ENCODE measurements at regions of chr3 and their contacts with region 1.

Region 1: DNA sequence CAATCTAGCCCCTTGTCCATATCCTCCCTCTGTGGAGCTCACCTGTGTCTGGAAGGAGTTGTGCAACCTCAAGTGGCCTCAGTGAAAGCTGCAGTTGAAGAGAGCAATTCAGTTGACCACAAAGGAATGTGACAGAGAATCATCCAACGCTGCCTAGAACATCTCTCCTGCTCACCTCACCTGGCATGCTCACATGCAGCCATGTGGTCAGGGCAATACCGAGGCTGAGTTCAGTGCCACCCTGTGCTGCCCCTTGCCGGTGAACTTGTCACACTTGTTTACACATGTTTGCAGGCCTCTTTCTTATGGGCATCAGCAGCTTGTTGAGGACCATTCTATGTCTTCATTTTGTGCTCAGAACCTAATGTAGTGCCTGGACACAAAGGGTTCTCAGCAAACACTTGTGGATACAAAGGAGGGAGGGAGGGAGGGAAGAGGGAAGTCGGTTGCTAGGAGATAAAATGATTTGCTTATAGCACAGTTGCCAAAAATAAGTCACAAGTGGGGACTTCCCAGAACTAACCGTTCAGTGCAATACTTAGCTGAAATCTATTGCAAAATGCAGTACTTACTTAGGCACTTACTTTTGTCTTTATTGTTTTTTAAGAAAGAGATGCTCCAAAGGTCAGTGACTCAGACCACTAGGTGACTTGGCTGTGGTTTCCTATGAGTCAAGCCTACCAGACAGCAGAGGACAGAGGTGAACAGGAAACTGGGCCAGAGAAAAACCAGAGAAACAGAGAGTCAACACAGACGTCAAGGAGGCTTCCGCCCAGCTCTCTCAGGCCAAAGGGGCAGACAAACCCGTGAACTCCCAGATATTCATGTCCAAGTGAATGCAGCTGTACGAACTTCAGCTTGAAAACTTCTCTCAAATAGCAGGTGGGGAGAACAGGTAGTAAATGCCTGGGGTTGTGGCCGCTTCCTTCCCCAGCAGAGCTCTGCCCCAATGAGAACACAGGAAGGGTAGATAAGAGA is 227.8 kb upstream of the CTNNB1 start:
- DNase-seq: peak; percentile 52 to 88
- H3K4me3 ChIP-seq: no peak overlapping the region
- H3K27ac ChIP-seq: peak overlapping the region in 1 of 2 donors; percentile 42
- H3K4me1 ChIP-seq: peaks cover 5 to 7% of the 10 kb centered on the region in 2 donors
- H3K27me3 ChIP-seq: no peaks in the 10 kb centered on the region
- CTCF ChIP-seq: no peak

Region 2: DNA sequence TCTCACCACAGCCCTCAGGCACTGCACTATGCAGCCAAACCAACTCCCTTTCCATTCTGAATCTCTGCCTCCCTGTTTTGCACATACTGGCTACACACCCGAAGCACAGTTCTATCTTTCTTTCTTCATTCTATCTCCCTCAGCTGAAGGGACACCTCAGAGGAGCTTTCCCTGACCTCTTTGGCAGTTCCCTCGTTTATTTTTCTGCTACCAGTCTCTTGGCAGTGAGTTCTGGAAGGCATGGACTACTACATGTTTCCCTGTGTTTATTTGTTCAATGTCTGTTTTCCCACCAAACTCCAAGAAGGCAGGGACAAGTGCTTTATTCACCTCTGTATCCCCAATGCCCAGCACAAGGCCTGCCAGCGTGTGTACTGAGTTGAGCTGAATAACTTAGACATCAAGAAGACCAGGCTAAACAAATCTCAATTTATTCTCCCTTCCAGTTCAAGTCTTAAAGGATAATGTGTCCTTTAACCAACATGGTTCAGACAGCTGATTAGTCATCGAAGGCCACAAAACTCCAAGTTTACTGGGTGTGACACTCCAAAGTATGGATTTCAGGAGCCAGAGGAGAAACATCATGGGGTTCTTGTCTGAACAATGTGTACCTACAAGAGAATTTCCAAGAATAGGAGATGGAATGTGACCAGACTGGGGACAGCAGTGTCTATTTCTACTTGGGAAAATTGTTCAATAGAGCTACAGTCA is 32.3 kb before region 1 on chr3:
- intact Hi-C with region 1: loop called (anchors 1 kb)
- DNase-seq: no peak
- H3K4me3 ChIP-seq: no peak overlapping the region
- H3K27ac ChIP-seq: peak overlapping the region; percentile 55 to 60
- H3K4me1 ChIP-seq: peaks cover 0 to 13% of the 10 kb centered on the region in 2 donors
- H3K27me3 ChIP-seq: no peaks in the 10 kb centered on the region
- CTCF ChIP-seq: no peak